Colonic mucosa (tissue), 4 donors: ENCODE measurements at regions of chr2 and their contacts with region 1.

Region 1: GRCh38 chr2:175282290-175282689 is 100.8 kb upstream of the ATP5MC3 start:
- DNase-seq: no peak
- H3K4me3 ChIP-seq: no peak overlapping the region
- H3K27ac ChIP-seq: no peak overlapping the region
- H3K4me1 ChIP-seq: no peaks in the 10 kb centered on the region
- H3K27me3 ChIP-seq: no peaks in the 10 kb centered on the region
- CTCF ChIP-seq: peak; percentile 39

Region 2: DNA sequence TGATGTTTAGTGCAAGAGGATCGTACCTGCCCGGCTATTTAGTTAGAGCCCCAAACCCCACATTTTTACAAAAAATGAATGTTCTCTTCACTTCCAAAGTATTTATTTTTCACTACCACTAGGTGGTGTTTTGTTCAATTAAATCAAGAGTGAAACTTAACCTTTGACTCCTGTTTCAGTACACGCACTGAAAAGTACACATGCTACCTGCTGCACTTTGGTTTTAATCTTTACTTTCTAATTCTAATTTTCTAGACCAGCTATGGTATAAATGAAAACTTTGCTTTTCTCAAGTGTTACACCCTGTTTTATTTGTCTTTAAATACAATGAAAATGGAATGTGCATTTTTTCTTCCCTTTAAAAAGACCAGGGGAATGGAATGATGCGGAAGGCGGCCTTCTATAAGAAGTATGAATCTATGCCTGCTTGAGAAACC is 245.7 kb before region 1 on chr2:
- intact Hi-C with region 1: loop called (anchors 5 kb)
- DNase-seq: no peak
- H3K4me3 ChIP-seq: no peak overlapping the region
- H3K27ac ChIP-seq: no peak overlapping the region
- H3K4me1 ChIP-seq: no peaks in the 10 kb centered on the region
- H3K27me3 ChIP-seq: no peaks in the 10 kb centered on the region
- CTCF ChIP-seq: peak; percentile 48

Region 3: DNA sequence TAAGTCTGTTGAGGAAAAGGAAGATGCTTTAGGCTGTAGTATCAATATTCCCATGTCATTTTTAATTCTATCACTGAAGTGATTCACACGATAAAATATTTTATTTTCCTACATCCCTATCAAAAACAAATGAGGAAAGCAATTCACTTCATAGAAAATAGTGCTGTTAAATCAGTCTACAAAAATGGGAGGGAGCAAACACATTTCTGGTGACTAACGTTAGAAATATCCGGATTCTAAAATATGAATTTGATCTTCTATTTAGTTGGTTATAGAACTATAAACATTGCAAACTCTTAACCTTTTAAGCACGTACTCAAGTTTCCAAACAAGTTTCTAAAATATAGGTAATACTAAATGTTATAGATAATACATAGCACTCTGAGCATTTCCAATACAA is 135.1 kb before region 1 on chr2:
- intact Hi-C with region 1: no loop called
- DNase-seq: no peak
- H3K4me3 ChIP-seq: no peak overlapping the region
- H3K27ac ChIP-seq: no peak overlapping the region
- H3K4me1 ChIP-seq: no peaks in the 10 kb centered on the region
- H3K27me3 ChIP-seq: no peaks in the 10 kb centered on the region
- CTCF ChIP-seq: no peak